GM10248 (cell line): ENCODE measurements at regions of chr20 and their contacts with region 1.

Region 1: GRCh38 chr20:63537525-63538203 is 488 bp upstream of the PTK6 start:
- DNase-seq: peak; percentile 99
- CTCF ChIP-seq: peak; percentile 98

Region 2: GRCh38 chr20:63495741-63496595 is 41.7 kb before region 1 on chr20:
- CTCF ChIA-PET with region 1: interaction called, 15 read pairs
- POLR2A ChIA-PET with region 1: no interaction called
- DNase-seq: peak; percentile 89
- CTCF ChIP-seq: peak; percentile 97

Region 3: DNA sequence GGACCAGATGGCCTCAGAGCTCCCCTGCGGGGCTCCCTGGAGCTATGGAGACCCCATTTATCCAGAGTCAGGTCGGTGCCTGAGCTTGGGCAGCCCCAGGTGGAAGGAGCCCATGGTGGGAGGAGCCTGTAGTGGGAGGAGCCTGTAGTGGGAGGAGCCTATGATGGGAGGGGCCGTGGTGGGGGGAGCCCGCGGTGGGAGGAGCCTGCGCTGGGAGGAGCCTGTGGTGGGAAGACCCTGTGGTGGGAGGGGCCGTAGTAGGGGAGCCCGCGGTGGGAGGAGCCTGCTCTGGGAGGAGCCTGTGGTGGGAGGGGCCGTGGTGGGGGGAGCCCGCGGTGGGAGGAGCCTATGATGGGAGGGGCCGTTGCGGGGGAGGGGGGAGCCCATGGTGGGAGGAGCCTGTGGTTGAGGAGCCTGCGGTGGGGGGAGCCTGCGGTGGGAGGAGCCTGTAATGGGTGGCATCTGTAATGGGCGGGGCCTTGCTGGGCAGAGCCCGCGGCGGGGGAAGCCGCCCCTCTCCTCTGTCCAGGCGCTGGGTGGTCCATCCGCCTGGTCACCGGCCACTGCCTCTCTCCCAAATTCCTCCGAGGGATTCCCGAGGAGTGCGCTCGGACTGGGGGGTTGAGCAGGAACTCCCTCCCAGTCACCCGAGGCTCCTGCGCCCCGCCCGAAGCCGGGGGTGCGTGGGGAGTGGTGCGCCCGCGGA is 15.7 kb after region 1 on chr20:
- CTCF ChIA-PET with region 1: interaction called, 22 read pairs
- POLR2A ChIA-PET with region 1: no interaction called
- DNase-seq: peak; percentile 87
- CTCF ChIP-seq: no peak

Region 4: GRCh38 chr20:63574156-63574828 is 36.6 kb after region 1 on chr20 and contains the start of gene HELZ2:
- CTCF ChIA-PET with region 1: interaction called, 19 read pairs
- POLR2A ChIA-PET with region 1: interaction called, 3 read pairs
- DNase-seq: peak; percentile 90
- CTCF ChIP-seq: no peak

Region 5: DNA sequence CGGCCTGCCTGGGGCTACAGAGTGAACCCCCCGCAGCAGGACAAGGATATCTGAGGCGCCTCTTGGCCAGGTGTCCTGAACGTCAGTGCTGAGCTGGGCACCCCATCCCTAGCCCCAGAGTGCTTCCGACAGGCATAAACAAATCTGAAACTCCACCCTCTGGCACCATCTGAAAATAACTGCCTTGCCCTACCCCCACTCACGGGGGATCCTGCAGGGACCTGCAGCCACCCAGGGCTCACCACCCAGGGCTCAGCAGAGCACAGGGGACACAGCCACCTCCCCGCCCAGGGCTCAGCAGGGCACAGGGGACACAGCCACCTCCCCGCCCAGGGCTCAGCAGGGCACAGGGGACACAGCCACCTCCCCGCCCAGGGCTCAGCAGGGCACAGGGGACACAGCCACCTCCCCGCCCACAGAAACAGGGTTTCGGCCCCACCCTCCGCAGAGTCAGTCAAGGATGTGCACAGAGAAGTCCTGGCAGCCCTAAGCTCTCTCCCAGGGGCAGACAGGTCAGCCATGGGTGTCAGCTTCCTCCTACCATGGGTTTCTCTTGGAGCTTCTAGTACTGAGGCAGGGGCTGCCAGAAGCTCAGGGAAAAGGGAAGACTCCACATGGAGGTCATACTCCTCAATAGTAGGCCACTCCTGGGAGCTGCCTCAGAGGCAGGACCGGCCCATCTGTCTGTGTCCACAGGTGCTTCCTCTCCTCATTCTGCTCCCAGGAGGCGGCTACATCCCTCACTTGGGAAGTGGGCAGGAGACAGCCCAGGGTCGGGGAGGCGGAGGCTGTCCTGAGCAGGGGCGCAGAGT is 413.9 kb after region 1 on chr20:
- CTCF ChIA-PET with region 1: interaction called, 10 read pairs
- POLR2A ChIA-PET with region 1: no interaction called
- DNase-seq: no peak
- CTCF ChIP-seq: no peak